WTC11 (cell line): ENCODE measurements at regions of chr11 and their contacts with region 1.

Region 1: GRCh38 chr11:12043959-12044819 is 35.8 kb upstream of the DKK3 start:
- DNase-seq: peak; percentile 77
- ATAC-seq: peak; percentile 84
- H3K4me3 Mint-ChIP-seq: no peak overlapping the region
- H3K27ac Mint-ChIP-seq: no peak overlapping the region
- H3K4me1 Mint-ChIP-seq: peaks cover 9% of the 10 kb centered on the region
- H3K27me3 Mint-ChIP-seq: peaks cover 2% of the 10 kb centered on the region; the same call in 1 of the 2 replicates
- CTCF ChIP-seq: peak; percentile 78

Region 2: DNA sequence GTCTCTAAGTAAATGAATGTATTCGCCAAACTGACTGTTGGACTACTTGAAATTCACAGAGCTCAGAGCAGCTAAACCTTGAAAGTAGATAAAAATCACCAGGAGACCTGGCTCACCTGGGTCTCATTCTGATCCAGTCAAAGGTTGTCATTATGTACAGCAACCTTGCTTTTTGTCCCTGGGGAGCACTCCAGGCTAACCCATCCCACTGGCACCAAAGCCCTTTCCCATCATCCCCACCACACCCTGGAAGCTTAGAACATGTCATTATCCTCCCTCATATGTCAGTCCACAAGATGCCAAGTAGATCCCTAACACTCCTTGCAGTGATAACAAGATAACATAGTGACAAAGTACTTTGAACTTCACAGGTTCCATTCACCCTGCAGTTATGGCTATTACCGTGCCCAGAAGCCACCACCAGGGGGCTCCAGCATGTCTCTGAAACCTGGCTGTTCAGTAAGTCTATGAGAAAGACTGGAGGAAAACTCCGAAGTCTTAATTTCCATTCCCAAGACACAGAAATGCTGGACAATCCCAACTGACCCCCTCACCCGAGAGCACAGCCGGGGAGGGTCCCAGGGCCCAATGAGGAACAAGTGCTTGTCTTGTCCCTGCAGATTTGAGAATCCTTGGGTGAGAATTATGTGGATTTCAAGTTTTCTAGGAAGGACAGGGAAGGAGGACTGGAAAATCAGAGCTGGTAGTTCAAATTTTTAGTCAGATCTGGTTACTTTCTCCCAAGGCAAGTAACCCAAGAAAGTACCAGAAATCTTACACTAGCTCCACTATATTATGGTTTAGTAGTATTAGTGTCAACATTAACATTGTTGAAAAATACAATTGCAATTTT is 245.4 kb before region 1 on chr11:
- CTCF ChIA-PET with region 1: interaction called, 21 read pairs
- POLR2A ChIA-PET with region 1: no interaction called
- DNase-seq: peak; percentile 84
- ATAC-seq: peak; percentile 81
- H3K4me3 Mint-ChIP-seq: no peak overlapping the region
- H3K27ac Mint-ChIP-seq: no peak overlapping the region
- H3K4me1 Mint-ChIP-seq: no peaks in the 10 kb centered on the region
- H3K27me3 Mint-ChIP-seq: peaks cover 3% of the 10 kb centered on the region; the same call in 1 of the 2 replicates
- CTCF ChIP-seq: peak; percentile 81

Region 3: DNA sequence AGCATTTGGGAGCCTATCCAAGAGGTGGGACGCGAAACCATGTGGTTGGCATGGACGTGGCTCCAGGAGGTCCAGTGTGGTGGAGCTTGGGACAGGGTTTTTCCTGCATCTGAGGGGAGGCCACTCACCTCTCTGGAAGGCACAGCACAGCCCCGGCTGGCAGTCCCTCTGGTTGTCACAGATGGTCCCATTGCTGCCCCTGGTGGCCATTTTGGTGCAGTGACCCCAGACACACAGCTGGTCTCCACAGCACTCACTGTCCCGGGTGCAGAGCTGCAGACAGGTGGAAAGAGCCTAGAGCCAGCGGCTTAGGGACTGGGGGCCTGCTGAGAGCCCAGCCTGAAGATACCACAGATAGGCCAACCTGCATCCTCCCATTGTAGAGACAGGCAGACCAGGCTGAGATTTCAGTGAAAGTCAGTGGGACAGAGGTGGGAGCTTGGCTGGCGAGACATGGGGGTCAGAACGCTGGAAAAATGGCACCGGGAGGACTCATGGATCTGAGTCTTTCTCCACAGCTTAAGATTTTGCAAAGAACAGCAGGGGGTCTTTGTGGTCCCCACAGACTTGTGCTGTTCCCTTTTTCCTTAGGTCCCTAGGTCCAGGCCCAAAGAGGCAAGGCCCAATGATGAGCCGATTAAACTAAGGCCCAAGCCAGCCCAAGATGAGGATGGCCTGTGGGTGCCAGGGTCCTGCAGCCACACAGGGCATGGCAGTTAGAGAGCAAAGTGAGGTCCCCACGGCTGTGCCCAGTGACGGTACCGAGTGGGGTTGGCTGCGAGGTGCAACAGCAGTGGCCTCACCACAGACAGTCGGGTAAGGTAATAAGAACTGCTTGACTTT is 77.1 kb before region 1 on chr11:
- CTCF ChIA-PET with region 1: interaction called, 18 read pairs
- POLR2A ChIA-PET with region 1: no interaction called
- DNase-seq: peak; percentile 90
- ATAC-seq: peak; percentile 98
- H3K4me3 Mint-ChIP-seq: no peak overlapping the region
- H3K27ac Mint-ChIP-seq: no peak overlapping the region
- H3K4me1 Mint-ChIP-seq: peaks cover 8% of the 10 kb centered on the region; the same call in 1 of the 2 replicates
- H3K27me3 Mint-ChIP-seq: no peaks in the 10 kb centered on the region; the same call in 1 of the 2 replicates
- CTCF ChIP-seq: peak; percentile 77

Region 4: DNA sequence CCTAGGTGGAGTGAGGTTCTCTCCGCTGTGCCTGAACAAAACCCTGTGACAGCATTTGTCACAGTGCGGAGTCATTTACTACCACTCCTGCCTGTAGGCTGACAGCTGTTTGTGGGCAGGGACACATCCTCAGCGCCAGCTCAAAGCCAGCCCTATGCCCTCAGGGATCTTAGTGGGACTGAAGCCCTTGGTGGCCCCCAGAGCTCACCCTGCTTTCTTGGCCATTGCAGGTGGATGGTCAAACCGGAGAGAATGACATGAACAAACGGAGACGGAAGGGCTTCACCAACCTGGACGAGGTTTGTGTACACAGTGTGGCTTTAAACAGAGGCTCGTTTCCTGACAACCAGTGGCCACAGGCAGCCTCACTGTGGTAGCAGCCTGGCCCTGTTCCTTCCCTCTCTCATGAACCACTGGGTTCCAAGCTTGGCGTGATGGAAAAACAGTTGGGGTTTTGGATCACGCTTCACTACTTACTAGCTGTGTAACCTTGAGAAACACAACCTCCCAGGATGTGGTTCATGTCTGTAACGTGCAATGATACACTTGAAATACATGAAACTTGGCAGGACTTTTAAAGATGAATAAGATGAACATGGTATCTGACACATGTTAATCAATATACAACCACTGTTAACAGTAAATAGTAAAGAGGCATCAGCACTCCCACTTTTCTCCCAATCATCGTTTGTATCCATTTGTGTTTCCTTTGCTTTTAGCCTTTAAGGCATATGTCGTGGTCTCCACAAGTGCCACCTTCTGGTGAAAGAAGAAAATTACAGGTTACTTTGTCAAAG is 192.0 kb after region 1 on chr11:
- CTCF ChIA-PET with region 1: interaction called, 13 read pairs
- POLR2A ChIA-PET with region 1: no interaction called
- DNase-seq: no peak
- ATAC-seq: peak; percentile 70
- H3K4me3 Mint-ChIP-seq: no peak overlapping the region
- H3K27ac Mint-ChIP-seq: no peak overlapping the region
- H3K4me1 Mint-ChIP-seq: peaks cover 3% of the 10 kb centered on the region; the same call in 1 of the 2 replicates
- H3K27me3 Mint-ChIP-seq: no peaks in the 10 kb centered on the region; the same call in 1 of the 2 replicates
- CTCF ChIP-seq: peak; percentile 51; the same call in 1 of the 2 replicates

Region 5: GRCh38 chr11:12281571-12282478 is 237.6 kb after region 1 on chr11:
- CTCF ChIA-PET with region 1: interaction called, 47 read pairs
- POLR2A ChIA-PET with region 1: interaction called, 4 read pairs
- DNase-seq: peak; percentile 89
- ATAC-seq: peak; percentile 88
- H3K4me3 Mint-ChIP-seq: no peak overlapping the region
- H3K27ac Mint-ChIP-seq: no peak overlapping the region
- H3K4me1 Mint-ChIP-seq: peaks cover 5% of the 10 kb centered on the region; the same call in 1 of the 2 replicates
- H3K27me3 Mint-ChIP-seq: no peaks in the 10 kb centered on the region
- CTCF ChIP-seq: peak; percentile 96